ENCODE measurements at regions of chr5 and their contacts with region 1.

Region 1: GRCh38 chr5:10418654-10419345 is 22.9 kb upstream of the ROPN1L start:
- DNase-seq: no peak
- ATAC-seq: no peak

Region 2: GRCh38 chr5:10064546-10065195 is 354.1 kb before region 1 on chr5:
- intact Hi-C with region 1: no loop called
- DNase-seq: no peak
- ATAC-seq: no peak

Region 3: DNA sequence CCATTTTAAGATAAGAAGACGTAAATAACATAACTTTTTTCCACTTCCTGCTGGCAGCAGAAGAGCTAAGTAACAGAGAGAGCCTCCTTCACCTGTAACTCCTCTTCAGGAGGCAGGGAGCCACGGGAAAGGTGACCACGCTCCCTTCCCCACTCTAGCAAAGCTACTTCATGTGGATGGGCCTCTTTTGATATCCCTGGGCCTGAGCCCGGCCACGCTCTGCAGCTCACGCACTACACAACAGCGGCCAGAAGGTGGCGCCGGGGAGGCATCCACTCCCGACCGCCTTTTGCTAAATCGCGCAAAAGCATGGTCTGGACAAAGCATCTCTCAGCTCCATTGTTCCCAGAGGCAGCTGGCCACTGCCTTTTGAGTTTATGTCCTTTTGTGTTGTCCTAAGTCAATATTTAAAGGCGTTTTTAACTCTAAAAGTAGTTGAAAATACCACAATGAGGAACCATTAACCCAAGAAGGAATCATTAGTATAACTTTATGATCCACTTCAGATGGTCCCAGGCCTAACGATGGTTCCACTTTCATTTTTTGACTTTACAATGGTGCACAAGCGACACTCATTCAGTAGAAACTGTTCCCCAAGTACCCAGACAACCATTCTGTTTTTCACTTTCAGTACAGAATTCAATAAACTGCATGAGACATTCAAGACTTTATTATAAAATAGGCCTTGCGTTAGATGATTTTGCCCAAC is 134.7 kb before region 1 on chr5:
- intact Hi-C with region 1: loop called (anchors 5 kb)
- DNase-seq: peak; percentile 91
- ATAC-seq: peak; percentile 81

Region 4: GRCh38 chr5:10339058-10339811 is 79.6 kb before region 1 on chr5:
- intact Hi-C with region 1: no loop called
- DNase-seq: no peak
- ATAC-seq: no peak

Region 5: DNA sequence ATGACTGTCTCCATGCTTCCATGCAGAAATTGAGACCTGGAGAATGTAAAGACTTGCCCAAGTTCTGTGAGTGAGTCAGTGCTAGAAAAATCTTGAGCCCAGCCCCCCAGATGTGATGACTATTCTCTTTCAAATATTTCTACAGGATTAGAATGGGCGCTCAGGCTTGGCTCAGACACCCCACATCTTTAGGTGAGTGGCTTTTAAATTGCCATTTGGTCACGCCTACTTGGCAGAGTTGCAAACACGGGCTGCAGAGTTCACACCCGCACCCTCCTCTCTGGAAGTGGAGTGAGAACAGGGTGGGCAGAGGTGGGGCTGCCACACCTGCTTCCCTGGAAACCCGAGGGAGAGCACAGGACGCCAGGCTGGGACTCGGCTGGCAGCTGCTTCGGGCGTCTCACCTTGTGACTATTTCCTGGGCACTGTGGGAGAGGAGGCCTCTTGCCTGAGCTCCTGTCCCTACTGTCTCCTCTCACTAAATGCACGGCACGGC is 60.5 kb after region 1 on chr5:
- intact Hi-C with region 1: no loop called
- DNase-seq: no peak
- ATAC-seq: no peak